Pancreas (tissue), 10 donors: ENCODE measurements at regions of chr20 and their contacts with region 1.

Region 1: GRCh38 chr20:35434067-35435005 is 3.7 kb downstream of the GDF5 start:
- DNase-seq: peak in 2 of 6 donors; percentile 31 to 63
- ATAC-seq: no peak
- H3K4me3 ChIP-seq: no peak overlapping the region
- H3K27ac ChIP-seq: no peak overlapping the region
- H3K4me1 ChIP-seq: no peaks in the 10 kb centered on the region
- H3K27me3 ChIP-seq: no peaks in the 10 kb centered on the region
- CTCF ChIP-seq: no peak

Region 2: GRCh38 chr20:35303735-35304491 is 130.4 kb before region 1 on chr20:
- intact Hi-C with region 1: loop called in 2 of 3 experiments (anchors 5 kb)
- DNase-seq: peak; percentile 69 to 86 (median 78)
- ATAC-seq: peak; percentile 74 to 89 (median 86)
- H3K4me3 ChIP-seq: no peak overlapping the region
- H3K27ac ChIP-seq: no peak overlapping the region
- H3K4me1 ChIP-seq: peaks cover 0 to 5% (median 0%) of the 10 kb centered on the region in 3 donors
- H3K27me3 ChIP-seq: no peaks in the 10 kb centered on the region
- CTCF ChIP-seq: peak; percentile 81 to 95 (median 89)

Region 3: DNA sequence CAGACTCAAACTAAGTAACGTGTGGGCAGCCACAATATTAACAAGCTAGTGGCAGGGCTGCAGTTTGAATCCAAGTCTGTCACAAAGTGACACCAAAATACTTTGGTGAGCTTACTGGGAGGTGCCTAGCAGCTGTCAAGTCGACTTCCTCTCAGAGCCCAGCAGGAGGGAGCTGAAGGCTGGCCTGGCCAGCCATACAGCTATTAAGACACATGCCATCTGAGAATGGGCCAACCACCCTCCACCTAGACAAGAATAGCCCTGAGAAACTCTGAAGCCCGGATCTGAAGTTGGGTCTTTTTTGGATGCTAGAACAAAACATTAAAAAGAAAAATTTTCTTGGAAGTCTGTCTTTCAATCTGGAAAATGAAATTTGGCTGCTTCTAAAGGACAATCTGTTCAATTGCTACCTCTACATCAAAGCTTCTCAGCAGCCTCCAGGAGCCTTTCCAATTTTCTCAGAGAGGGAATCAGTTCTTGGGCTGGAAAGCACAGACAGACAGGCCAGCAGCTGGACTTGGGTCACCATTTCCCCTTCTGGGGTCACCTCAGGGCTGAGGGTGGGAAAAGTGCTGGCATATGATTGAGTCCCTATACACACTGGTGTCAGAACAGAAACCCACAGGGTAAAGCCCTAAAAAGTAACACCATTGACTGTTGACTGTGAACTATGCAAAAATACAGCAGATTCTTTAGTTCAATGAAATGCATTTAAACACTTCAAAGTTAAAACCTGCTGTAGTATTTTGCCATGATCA is 65.5 kb before region 1 on chr20:
- intact Hi-C with region 1: no loop called
- DNase-seq: no peak
- ATAC-seq: no peak
- H3K4me3 ChIP-seq: no peak overlapping the region
- H3K27ac ChIP-seq: no peak overlapping the region
- H3K4me1 ChIP-seq: no peaks in the 10 kb centered on the region
- H3K27me3 ChIP-seq: no peaks in the 10 kb centered on the region
- CTCF ChIP-seq: no peak

Region 4: GRCh38 chr20:36010825-36011224 is 576.5 kb after region 1 on chr20:
- intact Hi-C with region 1: no loop called
- DNase-seq: no peak
- ATAC-seq: no peak
- H3K4me3 ChIP-seq: no peak overlapping the region
- H3K27ac ChIP-seq: no peak overlapping the region
- H3K4me1 ChIP-seq: no peaks in the 10 kb centered on the region
- H3K27me3 ChIP-seq: no peaks in the 10 kb centered on the region
- CTCF ChIP-seq: no peak